ENCODE measurements at regions of chr6 and their contacts with region 1.

Region 1: GRCh38 chr6:134063966-134064445 is 11.6 kb upstream of the SLC2A12 start:
- DNase-seq: peak in 9 of 10 donors; percentile 57 to 85 (median 69)
- H3K4me3 ChIP-seq: peak overlapping the region in 5 of 59 donors; percentile 7 to 32 (median 26)
- H3K27ac ChIP-seq: peak overlapping the region in 41 of 59 donors; percentile 7 to 86 (median 69)
- H3K27me3 ChIP-seq: no peaks in the 10 kb centered on the region
- CTCF ChIP-seq: peak; percentile 38 to 94 (median 86)

Region 2: GRCh38 chr6:133952815-133953633 is 111.0 kb before region 1 on chr6 and contains the start of gene TBPL1:
- intact Hi-C with region 1: loop called in 1 of 2 experiments (anchors 5 kb)
- DNase-seq: peak; percentile 90 to 97 (median 95)
- H3K4me3 ChIP-seq: peak within 1 kb of the TSS; percentile 47 to 98 (median 88)
- H3K27ac ChIP-seq: peak within 1 kb of the TSS; percentile 84 to 99 (median 96)
- H3K27me3 ChIP-seq: no peaks in the 10 kb centered on the region
- CTCF ChIP-seq: peak in 31 of 56 donors; percentile 7 to 59 (median 35)
- total RNA-seq, gene TBPL1: 23.9 to 70.4 (median 49.9) TPM

Region 3: GRCh38 chr6:133973109-133973971 is 90.7 kb before region 1 on chr6:
- intact Hi-C with region 1: loop called (anchors 2 to 5 kb)
- DNase-seq: no peak
- H3K4me3 ChIP-seq: no peak overlapping the region
- H3K27ac ChIP-seq: peak overlapping the region in 51 of 59 donors; percentile 3 to 81 (median 60)
- H3K27me3 ChIP-seq: no peaks in the 10 kb centered on the region
- CTCF ChIP-seq: peak; percentile 73 to 97 (median 87)

Region 4: DNA sequence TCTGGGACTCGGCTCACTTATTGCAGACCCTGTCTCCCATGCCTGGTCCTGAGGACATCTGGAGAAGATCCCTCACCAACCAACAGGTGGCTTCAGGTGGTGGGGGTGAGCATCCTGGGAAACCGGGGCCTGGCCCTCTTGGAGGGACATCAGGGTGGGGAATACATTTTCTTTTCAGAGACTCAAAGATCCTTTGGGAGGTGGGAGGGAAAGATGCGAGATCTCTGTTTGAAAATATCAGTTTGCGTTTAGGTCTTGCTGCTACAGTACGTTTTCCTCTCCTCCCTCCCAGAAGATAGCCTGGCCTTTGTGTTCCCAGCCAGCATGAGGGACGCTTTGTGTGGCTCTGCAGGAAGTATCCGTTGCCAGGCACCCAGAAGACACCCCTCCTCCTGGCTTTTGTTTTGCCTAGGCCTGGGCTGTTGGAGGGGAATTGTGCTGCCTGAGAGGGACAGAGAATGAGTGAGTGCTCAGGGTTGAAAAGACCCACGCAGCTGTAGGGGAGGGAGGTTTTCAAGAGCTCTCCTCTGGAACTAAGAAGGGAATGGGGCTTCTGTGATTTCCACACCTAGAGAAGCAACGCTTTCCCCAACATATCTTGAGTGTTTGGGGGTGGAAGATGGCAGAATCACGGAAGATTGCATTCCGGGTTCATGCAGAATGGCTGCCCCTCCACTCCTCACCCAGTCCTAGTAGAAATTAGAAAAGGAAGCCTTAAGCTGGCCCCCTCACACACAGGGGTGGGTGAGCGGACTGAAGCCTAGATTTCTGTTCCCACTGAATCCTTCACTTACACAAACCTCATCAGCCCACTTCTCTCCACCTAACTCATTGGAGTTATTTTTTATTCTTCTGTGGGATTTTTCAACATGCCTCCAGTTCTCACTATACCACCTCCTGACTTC is 10.4 kb after region 1 on chr6:
- intact Hi-C with region 1: loop called in 1 of 2 experiments (anchors 1 kb)
- DNase-seq: peak in 9 of 10 donors; percentile 68 to 90 (median 85)
- H3K4me3 ChIP-seq: peak overlapping the region in 53 of 59 donors; percentile 2 to 69 (median 41)
- H3K27ac ChIP-seq: peak overlapping the region; percentile 58 to 99 (median 94)
- H3K27me3 ChIP-seq: no peaks in the 10 kb centered on the region
- CTCF ChIP-seq: peak in 22 of 56 donors; percentile 3 to 53 (median 20)

Region 5: GRCh38 chr6:134097114-134097707 is 33.2 kb after region 1 on chr6:
- intact Hi-C with region 1: loop called (anchors 2 to 5 kb)
- DNase-seq: peak in 8 of 10 donors; percentile 47 to 74 (median 64)
- H3K4me3 ChIP-seq: peak overlapping the region in 2 of 59 donors; percentile 0 to 17
- H3K27ac ChIP-seq: peak overlapping the region in 5 of 59 donors; percentile 3 to 28 (median 16)
- H3K27me3 ChIP-seq: no peaks in the 10 kb centered on the region
- CTCF ChIP-seq: peak; percentile 70 to 99 (median 88)